ENCODE measurements at regions of chr5 and their contacts with region 1.

Region 1: DNA sequence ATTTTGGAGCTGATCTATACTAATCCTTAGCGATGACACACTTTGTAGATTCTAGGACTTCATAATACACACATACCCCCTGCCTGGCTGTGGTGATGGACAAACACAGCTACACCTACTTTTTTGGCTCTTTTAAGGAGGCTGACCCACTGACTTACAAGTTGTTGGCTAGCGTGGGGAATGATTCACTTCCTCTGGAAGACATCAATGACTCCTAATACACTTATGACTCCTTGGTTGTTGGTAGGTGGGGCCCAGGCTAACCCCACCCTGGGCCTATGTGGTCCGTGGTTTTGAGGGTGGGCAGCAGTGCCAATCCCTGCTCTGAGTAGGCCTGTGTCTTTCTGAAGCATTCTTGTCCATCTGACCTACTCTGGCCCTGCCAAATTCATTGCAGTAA is 144.4 kb downstream of the SLC12A2 start:
- DNase-seq: peak; percentile 94
- H3K4me3 Mint-ChIP-seq: no peak overlapping the region
- H3K27ac Mint-ChIP-seq: peak overlapping the region; percentile 65
- H3K4me1 Mint-ChIP-seq: peaks cover 23% of the 10 kb centered on the region
- H3K27me3 Mint-ChIP-seq: no peaks in the 10 kb centered on the region
- CTCF ChIP-seq: no peak

Region 2: GRCh38 chr5:128349044-128349858 is 121.2 kb after region 1 on chr5:
- CTCF ChIA-PET with region 1: no interaction called
- POLR2A ChIA-PET with region 1: no interaction called
- intact Hi-C with region 1: loop called (anchors 5 kb)
- DNase-seq: peak; percentile 98
- H3K4me3 Mint-ChIP-seq: no peak overlapping the region
- H3K27ac Mint-ChIP-seq: peak overlapping the region; percentile 4
- H3K4me1 Mint-ChIP-seq: peaks cover 9% of the 10 kb centered on the region
- H3K27me3 Mint-ChIP-seq: no peaks in the 10 kb centered on the region
- CTCF ChIP-seq: no peak

Region 3: DNA sequence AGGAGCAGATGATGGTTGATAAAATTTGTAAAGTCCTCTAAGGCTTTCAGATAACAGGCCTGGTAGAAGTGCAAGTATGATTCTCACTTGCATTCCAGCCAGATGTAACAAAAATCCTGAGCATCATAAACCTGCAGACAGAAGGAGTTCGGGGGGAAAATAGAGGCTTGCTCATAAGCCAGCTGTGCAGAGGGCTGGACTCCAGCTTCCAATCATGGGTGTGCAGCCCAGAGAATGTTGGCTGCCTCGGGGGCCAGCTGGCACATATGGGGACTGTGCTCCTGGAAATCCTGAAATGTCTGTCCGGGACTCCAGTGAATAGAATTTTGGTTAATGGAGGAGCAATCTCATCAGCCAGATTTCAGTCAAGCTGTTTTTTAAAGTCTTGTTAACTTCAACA is 536.9 kb after region 1 on chr5:
- CTCF ChIA-PET with region 1: no interaction called
- POLR2A ChIA-PET with region 1: no interaction called
- intact Hi-C with region 1: no loop called
- DNase-seq: no peak
- H3K4me3 Mint-ChIP-seq: no peak overlapping the region
- H3K27ac Mint-ChIP-seq: no peak overlapping the region
- H3K4me1 Mint-ChIP-seq: no peaks in the 10 kb centered on the region
- H3K27me3 Mint-ChIP-seq: no peaks in the 10 kb centered on the region
- CTCF ChIP-seq: no peak